CD14-positive monocyte (primary cell): ENCODE measurements at regions of chr1 and their contacts with region 1.

Region 1: DNA sequence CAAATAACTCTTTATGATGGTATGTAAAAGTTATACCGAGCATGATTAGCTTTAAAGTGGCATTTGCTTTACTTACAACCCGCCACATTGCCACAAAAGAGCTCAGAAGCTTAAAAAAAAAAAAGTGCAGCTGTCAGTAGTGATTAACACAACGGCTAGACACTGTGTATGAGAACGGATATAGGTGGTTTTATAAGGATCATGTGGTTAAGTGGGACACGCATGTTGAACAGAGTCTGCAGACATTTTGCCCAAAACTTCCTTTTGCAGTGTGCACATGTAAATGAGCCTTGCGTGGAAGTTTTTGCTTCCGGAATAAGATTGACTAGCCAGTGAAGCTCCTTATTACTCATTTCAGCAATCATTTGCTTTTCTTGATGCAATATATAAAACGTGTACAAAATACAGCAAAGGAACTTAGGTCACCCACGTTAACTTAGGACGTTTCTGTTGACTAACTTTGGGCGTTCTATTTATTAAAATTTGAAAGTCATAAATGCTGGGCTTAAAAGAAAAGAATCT is 58.7 kb upstream of the RGS1 start:
- DNase-seq: peak; percentile 82 to 98 (median 94)
- H3K4me3 ChIP-seq: peak overlapping the region in 2 of 3 experiments; percentile 27 to 50
- H3K4me3 Mint-ChIP-seq: peak overlapping the region; percentile 34 to 66
- H3K27ac ChIP-seq: peak overlapping the region in 1 of 2 donors; percentile 65
- H3K27ac Mint-ChIP-seq: peak overlapping the region; percentile 61 to 91 (median 83)
- H3K4me1 ChIP-seq: peaks cover 19 to 26% of the 10 kb centered on the region in 2 donors
- H3K4me1 Mint-ChIP-seq: peaks cover 37% of the 10 kb centered on the region
- H3K27me3 ChIP-seq: no peaks in the 10 kb centered on the region
- H3K27me3 Mint-ChIP-seq: peaks cover 0 to 2% (median 2%) of the 10 kb centered on the region in 3 donors
- CTCF ChIP-seq: no peak

Region 2: DNA sequence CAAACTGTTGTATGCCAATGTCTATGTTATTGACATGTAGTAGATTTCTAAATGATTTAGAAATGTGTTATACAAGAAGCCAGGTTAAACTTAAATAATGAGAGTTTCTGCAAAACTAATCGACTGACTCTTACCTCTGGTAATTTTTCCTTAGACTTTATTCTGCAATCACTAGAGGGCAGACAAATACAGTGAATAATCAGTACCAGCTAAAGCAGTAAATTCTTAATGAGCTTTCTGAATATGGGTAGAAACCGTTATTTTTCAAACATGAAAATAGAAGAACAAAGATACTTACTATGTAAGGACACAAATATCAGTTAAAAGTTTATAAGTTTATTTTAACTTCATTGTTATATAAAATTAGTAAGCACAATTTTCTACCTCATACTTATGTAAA is 39.2 kb before region 1 on chr1:
- intact Hi-C with region 1: loop called in 1 of 2 experiments (anchors 5 kb)
- DNase-seq: peak in 2 of 3 donors; percentile 20 to 43
- H3K4me3 ChIP-seq: no peak overlapping the region
- H3K4me3 Mint-ChIP-seq: no peak overlapping the region
- H3K27ac ChIP-seq: no peak overlapping the region
- H3K27ac Mint-ChIP-seq: no peak overlapping the region
- H3K4me1 ChIP-seq: no peaks in the 10 kb centered on the region
- H3K4me1 Mint-ChIP-seq: peaks cover 5% of the 10 kb centered on the region
- H3K27me3 ChIP-seq: no peaks in the 10 kb centered on the region
- H3K27me3 Mint-ChIP-seq: peaks cover 0 to 5% (median 3%) of the 10 kb centered on the region in 3 donors
- CTCF ChIP-seq: peak; percentile 63

Region 3: GRCh38 chr1:192575499-192576189 is 58.8 kb after region 1 on chr1 and contains the start of gene RGS1:
- intact Hi-C with region 1: loop called in 1 of 2 experiments (anchors 10 kb)
- DNase-seq: peak; percentile 59 to 88 (median 59)
- H3K4me3 ChIP-seq: no peak within 1 kb of the TSS
- H3K4me3 Mint-ChIP-seq: peak within 1 kb of the TSS in 1 of 2 donors; percentile 52
- H3K27ac ChIP-seq: no peak within 1 kb of the TSS
- H3K27ac Mint-ChIP-seq: peak within 1 kb of the TSS in 6 of 7 donors; percentile 71 to 90 (median 80)
- H3K4me1 ChIP-seq: peaks cover 0 to 5% of the 10 kb centered on the region in 2 donors
- H3K4me1 Mint-ChIP-seq: peaks cover 7% of the 10 kb centered on the region
- H3K27me3 ChIP-seq: no peaks in the 10 kb centered on the region
- H3K27me3 Mint-ChIP-seq: no peaks in the 10 kb centered on the region
- CTCF ChIP-seq: no peak
- polyA plus RNA-seq, gene RGS1: 2.4 to 17.7 (median 15.7) TPM